Activated CD4-positive, alpha-beta memory T cell treated with anti-CD3 and anti-CD28 coated beads for 36 hours (primary cell): ENCODE measurements at regions of chr20 and their contacts with region 1.

Region 1: GRCh38 chr20:9978397-9979004 is 56.3 kb upstream of the ANKEF1 start:
- DNase-seq: peak; percentile 27
- H3K4me3 Mint-ChIP-seq: no peak overlapping the region
- H3K27ac Mint-ChIP-seq: no peak overlapping the region
- H3K4me1 Mint-ChIP-seq: peaks cover 5% of the 10 kb centered on the region
- H3K27me3 Mint-ChIP-seq: peaks cover 2% of the 10 kb centered on the region

Region 2: GRCh38 chr20:9939231-9939630 is 39.3 kb before region 1 on chr20:
- CTCF ChIA-PET with region 1: no interaction called
- POLR2A ChIA-PET with region 1: no interaction called
- intact Hi-C with region 1: no loop called
- DNase-seq: no peak
- H3K4me3 Mint-ChIP-seq: no peak overlapping the region
- H3K27ac Mint-ChIP-seq: no peak overlapping the region
- H3K4me1 Mint-ChIP-seq: no peaks in the 10 kb centered on the region
- H3K27me3 Mint-ChIP-seq: no peaks in the 10 kb centered on the region

Region 3: DNA sequence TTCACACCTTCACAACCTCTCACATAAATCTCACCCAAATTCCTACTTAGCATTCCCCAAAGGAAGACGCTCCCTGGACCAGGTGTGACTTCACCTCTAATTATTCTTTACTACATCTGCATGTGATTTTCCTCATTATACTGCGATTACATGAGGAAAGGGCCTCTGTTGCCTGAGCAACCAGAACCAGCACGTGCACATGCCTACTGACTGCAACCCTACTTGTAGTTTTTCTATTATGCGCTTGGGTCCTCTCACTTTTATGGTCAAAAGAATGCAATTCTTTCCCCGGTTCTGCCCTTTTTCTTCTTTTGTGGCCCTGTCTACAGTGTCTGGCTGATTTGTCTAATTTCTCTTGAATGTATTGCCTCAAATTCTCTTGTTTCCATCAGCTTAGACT is 35.9 kb after region 1 on chr20:
- CTCF ChIA-PET with region 1: no interaction called
- POLR2A ChIA-PET with region 1: no interaction called
- intact Hi-C with region 1: no loop called
- DNase-seq: no peak
- H3K4me3 Mint-ChIP-seq: no peak overlapping the region
- H3K27ac Mint-ChIP-seq: no peak overlapping the region
- H3K4me1 Mint-ChIP-seq: no peaks in the 10 kb centered on the region
- H3K27me3 Mint-ChIP-seq: peaks cover 6% of the 10 kb centered on the region

Region 4: DNA sequence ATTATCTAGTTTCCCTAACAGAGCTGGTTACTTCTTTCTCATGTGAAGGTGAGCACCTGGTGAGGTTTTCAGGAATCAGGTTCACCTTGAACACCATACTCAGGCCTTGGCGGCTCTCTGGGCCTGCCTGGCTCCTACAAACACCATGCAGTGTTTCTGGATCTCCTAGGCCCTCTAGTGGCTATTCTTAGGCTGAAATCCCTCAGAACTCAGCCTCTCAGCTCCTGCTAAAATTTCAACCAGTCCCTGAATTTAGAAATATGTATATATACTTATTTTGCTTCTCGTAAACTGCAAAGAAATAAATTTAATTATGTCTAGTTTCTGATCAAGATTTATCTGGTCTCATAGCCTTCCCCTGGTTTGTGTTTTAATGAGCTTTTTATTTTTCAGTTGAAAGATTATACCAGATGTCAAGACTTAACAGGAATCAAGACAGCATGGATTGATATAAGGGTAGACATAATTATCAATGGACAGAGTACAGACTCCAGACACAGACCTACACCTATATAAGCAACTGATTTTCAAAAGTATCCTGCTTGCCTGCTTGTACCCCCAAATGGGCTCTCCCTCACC is 112.2 kb after region 1 on chr20:
- CTCF ChIA-PET with region 1: interaction called, 80 read pairs
- POLR2A ChIA-PET with region 1: no interaction called
- intact Hi-C with region 1: loop called (anchors 1 kb)
- DNase-seq: peak; percentile 18
- H3K4me3 Mint-ChIP-seq: no peak overlapping the region
- H3K27ac Mint-ChIP-seq: no peak overlapping the region
- H3K4me1 Mint-ChIP-seq: no peaks in the 10 kb centered on the region
- H3K27me3 Mint-ChIP-seq: peaks cover 2% of the 10 kb centered on the region

Region 5: DNA sequence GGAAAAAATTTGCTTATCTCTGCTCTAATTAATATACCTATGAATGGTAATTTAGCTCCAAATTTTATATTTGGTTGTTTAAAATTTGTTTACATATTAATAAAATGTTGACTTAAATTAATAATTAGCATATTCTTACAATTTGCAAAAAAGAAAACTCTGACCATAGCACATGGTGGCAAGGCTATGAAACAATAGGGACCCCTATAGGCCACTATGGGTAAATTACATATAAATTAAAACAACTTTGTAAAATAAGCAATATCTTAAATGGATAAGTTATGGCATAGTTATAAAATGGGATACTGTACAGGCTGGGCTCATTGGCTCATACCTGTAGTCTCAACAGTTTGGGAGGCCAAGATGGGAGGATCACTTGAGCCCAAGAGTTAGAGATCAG is 379.5 kb after region 1 on chr20:
- CTCF ChIA-PET with region 1: interaction called, 6 read pairs
- POLR2A ChIA-PET with region 1: no interaction called
- intact Hi-C with region 1: loop called (anchors 2 kb)
- DNase-seq: no peak
- H3K4me3 Mint-ChIP-seq: no peak overlapping the region
- H3K27ac Mint-ChIP-seq: no peak overlapping the region
- H3K4me1 Mint-ChIP-seq: peaks cover 5% of the 10 kb centered on the region
- H3K27me3 Mint-ChIP-seq: no peaks in the 10 kb centered on the region

Region 6: GRCh38 chr20:10536531-10536930 is 558.0 kb after region 1 on chr20:
- CTCF ChIA-PET with region 1: interaction called, 5 read pairs
- POLR2A ChIA-PET with region 1: no interaction called
- intact Hi-C with region 1: loop called (anchors 1 kb)
- DNase-seq: peak; percentile 42
- H3K4me3 Mint-ChIP-seq: no peak overlapping the region
- H3K27ac Mint-ChIP-seq: no peak overlapping the region
- H3K4me1 Mint-ChIP-seq: peaks cover 10% of the 10 kb centered on the region
- H3K27me3 Mint-ChIP-seq: no peaks in the 10 kb centered on the region